ENCODE measurements at regions of chr6 and their contacts with region 1.

Region 1: GRCh38 chr6:42043787-42044475 is 6.4 kb upstream of the TAF8 start:
- DNase-seq: peak; percentile 95
- H3K4me3 Mint-ChIP-seq: peak overlapping the region; percentile 54
- H3K27ac Mint-ChIP-seq: peak overlapping the region; percentile 96
- H3K4me1 Mint-ChIP-seq: peaks cover 91% of the 10 kb centered on the region
- H3K27me3 Mint-ChIP-seq: no peaks in the 10 kb centered on the region

Region 2: GRCh38 chr6:41801380-41801779 is 242.6 kb before region 1 on chr6:
- CTCF ChIA-PET with region 1: interaction called, 22 read pairs
- POLR2A ChIA-PET with region 1: interaction called, 5 read pairs
- DNase-seq: no peak
- H3K4me3 Mint-ChIP-seq: no peak overlapping the region
- H3K27ac Mint-ChIP-seq: no peak overlapping the region
- H3K4me1 Mint-ChIP-seq: peaks cover 6% of the 10 kb centered on the region
- H3K27me3 Mint-ChIP-seq: no peaks in the 10 kb centered on the region

Region 3: DNA sequence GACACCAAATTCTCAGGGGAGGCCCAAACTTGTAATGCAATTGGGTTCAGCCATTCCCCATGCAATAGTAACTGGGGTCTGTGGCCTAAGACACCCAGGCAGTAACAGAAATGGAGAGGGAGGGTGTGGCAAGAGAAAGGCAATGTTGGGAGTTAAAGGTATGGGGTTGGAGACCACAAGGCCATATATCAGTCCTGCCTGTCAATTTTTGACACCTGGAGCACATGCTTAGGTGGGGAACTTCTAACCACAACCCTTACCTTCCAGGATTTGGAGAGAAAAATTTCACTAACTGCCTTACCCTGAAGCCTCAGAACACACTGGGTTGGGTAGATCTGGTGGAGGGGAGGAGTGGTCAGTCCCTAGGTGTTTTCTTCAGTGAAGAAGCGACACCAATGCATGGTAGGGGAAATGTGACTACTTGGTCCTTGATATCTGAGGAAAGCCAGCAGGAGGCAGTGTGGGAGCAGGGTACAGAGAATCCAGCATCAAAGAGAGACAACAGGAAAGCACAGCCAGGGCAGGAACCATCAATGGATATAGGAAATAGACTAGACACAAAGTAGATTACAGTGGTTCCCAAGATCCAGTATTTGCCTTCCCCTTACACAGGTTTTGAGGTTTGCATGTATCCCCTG is 141.9 kb before region 1 on chr6:
- CTCF ChIA-PET with region 1: interaction called, 41 read pairs
- POLR2A ChIA-PET with region 1: interaction called, 6 read pairs
- DNase-seq: peak; percentile 72
- H3K4me3 Mint-ChIP-seq: no peak overlapping the region
- H3K27ac Mint-ChIP-seq: no peak overlapping the region
- H3K4me1 Mint-ChIP-seq: peaks cover 17% of the 10 kb centered on the region
- H3K27me3 Mint-ChIP-seq: no peaks in the 10 kb centered on the region

Region 4: GRCh38 chr6:41920921-41921711 is 122.8 kb before region 1 on chr6 and contains the starts of genes BYSL and MED20:
- CTCF ChIA-PET with region 1: interaction called, 199 read pairs
- POLR2A ChIA-PET with region 1: interaction called, 71 read pairs
- DNase-seq: peak; percentile 95
- H3K4me3 Mint-ChIP-seq: peak within 1 kb of the TSS; percentile 95
- H3K27ac Mint-ChIP-seq: peak within 1 kb of the TSS; percentile 97
- H3K4me1 Mint-ChIP-seq: peaks cover 59% of the 10 kb centered on the region
- H3K27me3 Mint-ChIP-seq: no peaks in the 10 kb centered on the region
- total RNA-seq, gene BYSL: 23.9 to 24.8 TPM
- total RNA-seq, gene MED20: 21.4 to 21.9 TPM

Region 5: GRCh38 chr6:42009966-42010891 is 33.7 kb before region 1 on chr6:
- CTCF ChIA-PET with region 1: interaction called, 9 read pairs
- POLR2A ChIA-PET with region 1: interaction called, 26 read pairs
- DNase-seq: peak; percentile 33
- H3K4me3 Mint-ChIP-seq: peak overlapping the region; percentile 43
- H3K27ac Mint-ChIP-seq: peak overlapping the region; percentile 82
- H3K4me1 Mint-ChIP-seq: peaks cover 67% of the 10 kb centered on the region
- H3K27me3 Mint-ChIP-seq: no peaks in the 10 kb centered on the region

Region 6: DNA sequence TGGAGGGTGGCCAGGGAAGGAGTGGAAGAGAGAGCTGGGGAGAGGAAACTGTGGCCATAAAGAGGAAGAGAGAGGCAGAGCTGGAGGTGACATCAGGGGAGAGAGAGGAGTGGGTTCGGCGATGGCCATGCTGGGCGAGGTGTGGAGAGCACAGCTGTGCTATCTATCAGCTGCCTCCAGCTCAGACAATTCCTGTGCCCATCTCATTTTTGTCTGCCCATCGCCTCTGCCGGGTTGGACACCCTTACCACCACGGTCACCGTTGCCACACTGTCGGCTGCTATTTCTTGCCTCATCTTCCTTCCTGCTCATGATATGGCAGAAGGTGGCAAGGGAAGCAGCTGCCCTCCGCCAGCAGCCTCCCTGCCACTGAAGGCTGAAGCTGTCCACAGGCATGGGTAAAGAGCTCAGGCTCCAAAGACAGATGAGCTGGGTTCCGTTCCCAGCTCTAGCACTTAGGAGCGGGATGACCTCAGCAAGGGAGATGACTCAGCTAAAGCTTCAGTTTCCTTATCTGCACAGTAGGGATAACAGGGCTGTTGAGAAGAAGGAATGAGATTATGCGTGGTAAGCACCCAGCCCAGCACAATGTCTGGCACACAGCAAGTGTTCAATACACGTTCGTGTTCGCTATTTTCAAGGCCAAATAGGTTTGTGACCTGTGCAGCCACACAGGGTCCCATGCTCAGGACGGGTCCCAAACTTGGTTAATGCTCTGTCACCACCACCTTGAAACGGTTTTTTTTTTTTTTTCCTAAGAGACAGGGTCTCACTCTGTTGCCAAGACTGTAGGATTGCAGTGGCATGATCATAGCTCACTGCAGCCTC is 15.5 kb before region 1 on chr6:
- CTCF ChIA-PET with region 1: interaction called, 17 read pairs
- POLR2A ChIA-PET with region 1: interaction called, 74 read pairs
- DNase-seq: no peak
- H3K4me3 Mint-ChIP-seq: peak overlapping the region; percentile 20
- H3K27ac Mint-ChIP-seq: peak overlapping the region; percentile 87
- H3K4me1 Mint-ChIP-seq: peaks cover 81% of the 10 kb centered on the region
- H3K27me3 Mint-ChIP-seq: no peaks in the 10 kb centered on the region

Measured in activated CD4-positive, alpha-beta memory T cell treated with anti-CD3 and anti-CD28 coated beads, Interleukin-2, amount 10 ng/mL, durations not matched to agents 7 days and 5 days (primary cell).